Activated CD4-positive, alpha-beta T cell treated with anti-CD3 and anti-CD28 coated beads, Interleukin-2, amount 10 ng/mL, durations not matched to agents 24 days and 14 days (primary cell): ENCODE measurements at regions of chr3 and their contacts with region 1.

Region 1: DNA sequence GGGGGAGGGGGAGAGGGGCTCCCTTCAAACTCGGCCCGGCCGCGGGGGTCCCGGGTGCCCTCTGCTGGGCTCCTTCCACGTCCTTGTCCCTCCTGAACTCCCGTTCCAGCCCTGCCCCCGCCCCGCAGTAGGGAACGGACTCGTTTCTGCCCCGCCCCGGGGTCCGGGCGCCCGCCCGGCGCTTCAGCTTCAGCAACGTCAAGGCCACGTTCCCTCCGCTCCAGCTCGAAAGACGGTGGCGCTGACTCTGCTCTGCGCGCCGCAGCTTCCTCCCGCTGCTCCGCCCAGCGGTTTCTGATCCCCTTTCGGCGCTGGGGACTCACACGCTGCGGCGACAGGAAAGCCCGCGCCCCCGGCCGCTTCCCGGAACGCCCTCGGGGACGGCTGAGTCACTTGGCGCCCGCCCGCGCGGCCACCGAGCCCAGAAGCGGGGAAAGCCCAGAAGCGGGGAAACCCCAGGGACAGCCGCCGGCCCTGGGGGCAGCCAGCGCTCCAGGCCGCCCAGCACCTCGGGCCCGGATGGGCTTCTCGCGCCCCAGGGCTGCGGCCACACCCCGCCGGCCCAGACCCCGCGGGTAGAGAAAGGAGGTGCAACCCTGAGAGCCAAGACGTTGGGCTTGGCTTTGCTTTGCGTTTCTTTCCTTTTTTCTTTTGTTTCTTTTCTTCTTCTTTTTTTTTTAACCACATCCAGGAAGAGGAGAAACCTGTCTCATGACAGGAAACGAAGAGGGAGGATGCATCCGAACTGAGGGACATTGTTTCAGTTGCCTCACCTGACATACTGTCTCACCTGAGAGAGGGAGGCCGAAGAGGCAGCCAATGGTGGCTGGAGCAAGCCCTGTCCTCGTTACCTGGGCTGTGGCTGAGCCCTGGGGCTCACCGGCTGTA is 28.9 kb downstream of the ARHGAP31 start:
- DNase-seq: peak; percentile 97
- H3K4me3 Mint-ChIP-seq: peak overlapping the region; percentile 82
- H3K27ac Mint-ChIP-seq: peak overlapping the region; percentile 93
- H3K4me1 Mint-ChIP-seq: peaks cover 38% of the 10 kb centered on the region
- H3K27me3 Mint-ChIP-seq: peaks cover 25% of the 10 kb centered on the region

Region 2: GRCh38 chr3:119279101-119279554 is 44.0 kb before region 1 on chr3:
- intact Hi-C with region 1: loop called (anchors 1 kb)
- DNase-seq: no peak
- H3K4me3 Mint-ChIP-seq: no peak overlapping the region
- H3K27ac Mint-ChIP-seq: no peak overlapping the region
- H3K4me1 Mint-ChIP-seq: peaks cover 7% of the 10 kb centered on the region
- H3K27me3 Mint-ChIP-seq: peaks cover 5% of the 10 kb centered on the region

Region 3: GRCh38 chr3:119310071-119310470 is 13.0 kb before region 1 on chr3:
- intact Hi-C with region 1: loop called (anchors 1 kb)
- DNase-seq: no peak
- H3K4me3 Mint-ChIP-seq: no peak overlapping the region
- H3K27ac Mint-ChIP-seq: no peak overlapping the region
- H3K4me1 Mint-ChIP-seq: peaks cover 15% of the 10 kb centered on the region
- H3K27me3 Mint-ChIP-seq: peaks cover 10% of the 10 kb centered on the region

Region 4: DNA sequence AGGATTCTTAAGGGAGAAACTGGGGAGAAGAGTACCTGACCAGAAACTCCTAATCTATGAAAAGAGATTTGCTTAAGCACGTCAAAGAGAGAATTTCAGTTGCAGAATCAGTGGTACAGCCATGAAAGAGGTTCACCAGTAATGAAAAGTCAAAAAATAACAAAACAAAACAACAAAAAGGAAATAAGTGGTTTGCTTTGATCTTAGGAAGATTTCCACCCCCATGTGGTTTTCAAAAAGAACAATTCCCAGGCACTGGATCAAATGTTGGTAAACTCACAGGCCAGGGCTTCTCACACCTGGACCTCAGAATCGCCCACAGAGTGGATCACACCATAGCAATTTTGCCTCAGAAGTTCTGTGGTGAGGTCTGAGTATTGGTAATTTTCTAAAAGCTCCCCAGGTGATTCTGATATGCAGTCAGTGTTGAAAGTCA is 72.9 kb after region 1 on chr3:
- intact Hi-C with region 1: loop called (anchors 1 kb)
- DNase-seq: no peak
- H3K4me3 Mint-ChIP-seq: no peak overlapping the region
- H3K27ac Mint-ChIP-seq: peak overlapping the region; percentile 61
- H3K4me1 Mint-ChIP-seq: peaks cover 26% of the 10 kb centered on the region
- H3K27me3 Mint-ChIP-seq: no peaks in the 10 kb centered on the region

Region 5: DNA sequence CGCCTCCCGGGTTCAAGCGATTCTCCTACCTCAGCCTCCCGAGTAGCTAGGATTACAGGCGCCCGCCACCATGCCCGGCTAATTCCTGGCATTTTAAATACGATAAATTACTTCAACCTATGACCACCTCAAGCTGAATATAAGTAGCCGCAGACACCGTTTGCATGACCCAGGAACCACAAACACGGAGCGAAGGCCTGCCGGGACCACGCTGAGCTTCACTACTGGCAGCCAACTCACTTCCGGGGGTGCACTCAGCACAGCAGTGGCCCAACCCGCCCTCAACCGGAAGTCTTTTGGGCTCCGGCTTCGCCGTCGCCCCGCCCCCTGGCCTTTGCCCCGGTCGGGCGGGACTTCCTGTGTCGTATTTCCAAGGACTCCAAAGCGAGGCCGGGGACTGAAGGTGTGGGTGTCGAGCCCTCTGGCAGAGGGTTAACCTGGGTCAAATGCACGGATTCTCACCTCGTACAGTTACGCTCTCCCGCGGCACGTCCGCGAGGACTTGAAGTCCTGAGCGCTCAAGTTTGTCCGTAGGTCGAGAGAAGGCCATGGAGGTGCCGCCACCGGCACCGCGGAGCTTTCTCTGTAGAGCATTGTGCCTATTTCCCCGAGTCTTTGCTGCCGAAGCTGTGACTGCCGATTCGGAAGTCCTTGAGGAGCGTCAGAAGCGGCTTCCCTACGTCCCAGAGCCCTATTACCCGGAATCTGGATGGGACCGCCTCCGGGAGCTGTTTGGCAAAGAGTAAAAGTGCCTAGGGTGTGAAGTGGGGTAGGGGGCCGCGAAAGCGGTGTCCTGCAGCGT is 175.3 kb after region 1 on chr3 and contains the start of gene TIMMDC1:
- intact Hi-C with region 1: loop called (anchors 1 kb)
- DNase-seq: peak; percentile 99
- H3K4me3 Mint-ChIP-seq: peak within 1 kb of the TSS; percentile 99
- H3K27ac Mint-ChIP-seq: peak within 1 kb of the TSS; percentile 99
- H3K4me1 Mint-ChIP-seq: peaks cover 23% of the 10 kb centered on the region
- H3K27me3 Mint-ChIP-seq: no peaks in the 10 kb centered on the region
- total RNA-seq, gene TIMMDC1: 113 and 117 TPM in 2 replicates

Region 6: GRCh38 chr3:119643528-119643927 is 320.4 kb after region 1 on chr3:
- intact Hi-C with region 1: loop called (anchors 2 kb)
- DNase-seq: no peak
- H3K4me3 Mint-ChIP-seq: no peak overlapping the region
- H3K27ac Mint-ChIP-seq: no peak overlapping the region
- H3K4me1 Mint-ChIP-seq: peaks cover 29% of the 10 kb centered on the region
- H3K27me3 Mint-ChIP-seq: no peaks in the 10 kb centered on the region